ENCODE measurements at regions of chr13 and their contacts with region 1.

Region 1: DNA sequence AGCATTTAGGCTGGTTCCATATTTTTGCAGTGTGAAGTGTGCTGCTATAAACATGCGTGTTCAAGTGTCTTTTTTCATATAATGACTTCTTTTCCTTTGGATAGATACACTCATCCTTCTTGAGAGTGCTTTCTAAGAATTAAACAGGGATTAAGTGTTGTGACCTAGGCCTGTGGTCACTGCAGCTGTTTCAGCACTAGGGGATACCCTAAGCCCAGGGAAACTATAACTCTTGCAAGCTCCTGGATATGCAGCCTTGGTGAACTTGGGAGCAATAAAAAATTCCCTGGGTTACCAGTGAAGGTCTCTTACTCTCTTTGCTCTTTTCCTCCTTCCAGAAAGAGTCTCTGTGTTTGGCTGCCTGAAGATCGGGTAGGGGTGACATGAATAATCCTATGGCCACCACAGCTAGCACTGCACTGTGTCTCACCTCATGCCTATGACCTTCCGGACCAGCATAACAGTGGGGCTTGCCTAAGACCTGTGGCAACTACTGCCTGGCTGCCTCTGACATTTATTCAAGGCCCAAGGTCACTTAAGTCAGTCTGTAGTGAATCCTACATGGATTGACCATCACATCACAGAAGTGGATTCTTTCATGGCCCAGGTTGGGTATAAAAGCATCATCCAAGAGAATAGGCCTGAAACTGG is 799.7 kb downstream of the DACH1 start:
- DNase-seq: no peak
- ATAC-seq: peak in 1 of 8 donors; percentile 51
- H3K4me3 ChIP-seq: no peak overlapping the region
- H3K27ac ChIP-seq: no peak overlapping the region
- H3K4me1 ChIP-seq: no peaks in the 10 kb centered on the region
- H3K27me3 ChIP-seq: no peaks in the 10 kb centered on the region
- CTCF ChIP-seq: peak in 5 of 9 donors; percentile 16 to 44 (median 29)

Region 2: DNA sequence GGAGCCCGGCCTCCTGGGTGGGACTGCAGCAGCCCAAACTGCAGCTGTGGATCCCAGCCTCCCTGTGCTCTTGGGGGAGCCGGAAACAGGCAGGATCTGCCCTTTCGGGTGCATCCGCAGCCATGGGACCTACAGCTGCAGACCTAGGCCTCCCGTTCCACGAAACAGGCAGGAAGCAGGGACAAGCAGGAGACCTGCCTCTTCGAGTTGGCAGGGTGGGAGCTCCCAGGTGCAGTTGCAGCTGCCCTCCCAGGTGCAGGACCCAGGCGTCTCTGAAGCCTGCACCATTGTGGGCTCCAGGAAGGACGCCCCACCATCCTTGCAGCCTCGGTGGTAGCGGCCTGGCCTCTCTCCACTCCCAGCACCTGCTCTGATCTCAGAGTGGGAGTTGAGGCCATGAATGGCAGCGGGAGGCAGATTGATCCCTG is 770.1 kb before region 1 on chr13:
- intact Hi-C with region 1: no loop called
- DNase-seq: no peak
- ATAC-seq: no peak
- H3K4me3 ChIP-seq: no peak overlapping the region
- H3K27ac ChIP-seq: no peak overlapping the region
- H3K4me1 ChIP-seq: no peaks in the 10 kb centered on the region
- H3K27me3 ChIP-seq: no peaks in the 10 kb centered on the region
- CTCF ChIP-seq: no peak

Region 3: DNA sequence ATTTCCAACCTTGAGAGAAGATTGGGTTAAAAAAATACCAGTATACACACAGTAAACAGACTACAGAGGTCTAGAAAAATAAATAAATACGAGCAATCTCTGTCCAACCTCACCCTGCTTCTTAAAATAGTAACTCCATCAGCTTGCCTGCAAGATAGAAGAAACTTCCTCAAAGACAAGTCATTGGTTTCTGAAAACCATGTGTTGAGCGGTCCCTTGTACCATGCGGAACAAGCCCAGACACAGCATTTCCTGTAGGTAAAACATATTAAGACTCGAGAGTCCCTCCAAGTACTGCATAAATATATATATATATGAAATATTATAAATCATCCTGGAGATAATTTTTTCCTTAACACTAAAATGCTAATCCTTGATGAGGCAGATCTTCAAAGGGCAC is 1502.7 kb after region 1 on chr13:
- intact Hi-C with region 1: loop called in 1 of 10 experiments (anchors 5 kb)
- DNase-seq: no peak
- ATAC-seq: peak in 1 of 8 donors; percentile 34
- H3K4me3 ChIP-seq: no peak overlapping the region
- H3K27ac ChIP-seq: no peak overlapping the region
- H3K4me1 ChIP-seq: peaks cover 0 to 5% (median 0%) of the 10 kb centered on the region in 9 donors
- H3K27me3 ChIP-seq: no peaks in the 10 kb centered on the region
- CTCF ChIP-seq: no peak

Measured in heart right ventricle (tissue), 16 donors.